Activated naive CD4-positive, alpha-beta T cell treated with anti-CD3 and anti-CD28 coated beads for 36 hours (primary cell): ENCODE measurements at regions of chr4 and their contacts with region 1.

Region 1: DNA sequence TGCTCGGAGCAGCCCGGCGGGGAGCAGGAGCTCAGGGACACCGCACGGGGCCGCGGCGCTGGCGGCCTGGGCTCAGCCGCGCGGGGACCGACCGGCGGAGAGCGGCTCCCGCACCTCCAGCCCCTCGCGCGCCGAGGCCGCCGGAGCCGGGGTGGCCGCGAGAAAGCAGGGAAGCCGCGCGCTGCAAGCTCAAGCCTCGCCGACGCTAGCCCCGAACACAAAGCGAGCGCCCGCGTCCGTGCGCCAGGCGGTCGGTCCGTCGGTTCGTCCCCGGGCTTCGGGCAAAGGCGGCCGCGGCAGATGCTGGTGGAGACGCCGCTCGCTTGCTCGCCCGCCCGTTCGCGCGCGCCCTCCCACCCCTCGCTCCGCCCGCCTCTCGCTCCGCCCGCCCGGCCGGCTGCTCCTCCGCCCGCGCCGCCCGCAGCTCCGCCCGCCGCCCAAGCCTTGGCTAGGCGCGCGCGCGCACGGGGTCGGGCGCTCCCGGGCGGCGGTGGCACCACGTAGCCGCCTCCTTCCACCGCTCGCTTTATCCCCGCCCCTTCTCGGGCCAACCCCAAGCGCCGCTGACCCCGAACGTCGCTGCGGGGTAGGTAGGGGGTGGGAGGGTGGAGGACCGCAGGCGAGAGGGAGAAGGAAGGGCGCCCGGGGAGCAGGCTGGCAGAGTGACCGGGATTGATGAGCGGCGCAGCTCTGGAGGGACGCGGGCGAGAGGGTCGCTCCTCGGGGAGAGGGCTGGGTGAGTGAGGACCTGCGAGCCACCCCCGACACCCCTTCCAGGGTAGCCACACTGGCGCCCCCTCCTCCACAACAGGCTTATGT is at the start of gene TSPAN5:
- DNase-seq: peak; percentile 77
- H3K4me3 Mint-ChIP-seq: peak within 1 kb of the TSS; percentile 98
- H3K27ac Mint-ChIP-seq: peak within 1 kb of the TSS; percentile 71
- H3K4me1 Mint-ChIP-seq: peaks cover 74% of the 10 kb centered on the region
- H3K27me3 Mint-ChIP-seq: no peaks in the 10 kb centered on the region
- total RNA-seq, gene TSPAN5: 12.5 to 13.1 TPM

Region 2: DNA sequence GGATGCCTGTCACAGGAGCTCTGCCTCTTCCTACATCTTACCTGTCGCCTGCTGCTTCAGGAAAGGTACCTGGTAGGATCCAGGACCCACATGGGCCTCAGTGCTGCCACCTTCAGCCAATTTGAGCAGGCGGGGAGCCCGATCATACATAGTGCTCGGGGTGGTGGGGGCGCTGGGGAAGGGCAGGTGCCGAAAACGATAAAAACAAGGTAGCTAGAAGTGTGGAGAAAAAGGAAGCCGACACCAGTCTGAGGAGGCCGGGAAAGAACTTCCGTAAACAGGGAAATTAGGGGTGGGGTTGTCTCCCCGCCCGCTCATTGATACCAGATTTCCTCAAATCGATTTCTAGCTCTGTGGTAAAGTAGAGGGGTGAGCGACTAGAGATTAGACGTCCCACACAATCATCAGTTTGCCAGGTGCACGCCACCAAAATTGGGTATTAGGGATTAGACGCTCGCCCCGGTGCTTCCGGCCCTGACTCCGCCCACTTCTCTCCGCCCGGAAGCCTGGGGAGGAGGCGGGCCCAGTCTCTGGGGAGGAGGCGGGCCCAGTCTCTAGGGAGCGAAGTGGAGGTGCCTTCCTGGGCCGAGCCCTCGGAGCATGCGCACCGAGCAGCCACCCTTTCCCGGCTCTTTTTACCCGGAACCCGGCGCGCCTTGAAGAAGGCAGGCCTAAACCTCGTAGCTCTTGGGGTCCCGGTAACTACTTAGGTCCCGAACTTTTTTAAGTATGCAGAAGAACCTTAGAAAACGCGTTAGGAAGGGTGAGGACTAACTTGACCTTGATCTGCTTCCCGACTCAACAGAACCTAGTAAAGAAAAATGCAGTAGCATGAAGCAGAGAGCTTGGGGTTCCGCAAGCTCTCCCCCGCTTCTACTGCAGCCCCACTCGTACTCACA is 515.2 kb before region 1 on chr4 and contains the start of gene STPG2:
- CTCF ChIA-PET with region 1: no interaction called
- intact Hi-C with region 1: loop called (anchors 1 kb)
- DNase-seq: peak; percentile 95
- H3K4me3 Mint-ChIP-seq: peak within 1 kb of the TSS; percentile 96
- H3K27ac Mint-ChIP-seq: peak within 1 kb of the TSS; percentile 99
- H3K4me1 Mint-ChIP-seq: peaks cover 19% of the 10 kb centered on the region
- H3K27me3 Mint-ChIP-seq: no peaks in the 10 kb centered on the region
- total RNA-seq, gene STPG2: not detected

Region 3: GRCh38 chr4:98374643-98375042 is 283.9 kb before region 1 on chr4:
- CTCF ChIA-PET with region 1: no interaction called
- intact Hi-C with region 1: no loop called
- DNase-seq: no peak
- H3K4me3 Mint-ChIP-seq: no peak overlapping the region
- H3K27ac Mint-ChIP-seq: no peak overlapping the region
- H3K4me1 Mint-ChIP-seq: peaks cover 7% of the 10 kb centered on the region
- H3K27me3 Mint-ChIP-seq: no peaks in the 10 kb centered on the region

Region 4: DNA sequence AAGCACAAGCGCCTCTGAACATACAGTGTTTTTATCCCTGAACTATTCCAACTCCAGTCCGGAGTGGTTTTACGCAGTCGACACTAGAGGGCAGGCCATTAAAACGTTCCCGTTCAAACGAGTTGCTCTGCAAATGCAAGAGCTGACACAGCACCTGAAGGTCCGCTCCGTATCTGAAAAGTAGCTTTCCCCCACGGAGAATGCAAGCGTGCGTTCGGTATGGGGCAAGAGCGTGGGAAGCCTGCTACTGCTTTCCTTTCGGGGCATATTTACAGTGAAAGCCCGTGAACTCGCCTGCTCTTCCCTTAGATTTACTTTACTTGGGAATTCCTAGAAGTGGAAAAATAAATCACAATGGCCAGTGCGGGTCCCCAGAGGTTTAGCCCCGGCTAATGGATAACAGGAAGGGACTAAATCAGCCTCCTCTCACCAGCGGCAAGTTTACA is 190.8 kb before region 1 on chr4:
- CTCF ChIA-PET with region 1: interaction called, 6 read pairs
- intact Hi-C with region 1: loop called (anchors 2 kb)
- DNase-seq: peak; percentile 85
- H3K4me3 Mint-ChIP-seq: peak overlapping the region; percentile 65
- H3K27ac Mint-ChIP-seq: no peak overlapping the region
- H3K4me1 Mint-ChIP-seq: peaks cover 16% of the 10 kb centered on the region
- H3K27me3 Mint-ChIP-seq: no peaks in the 10 kb centered on the region

Region 5: GRCh38 chr4:98601708-98602107 is 56.8 kb before region 1 on chr4:
- CTCF ChIA-PET with region 1: interaction called, 4 read pairs
- intact Hi-C with region 1: loop called (anchors 1 kb)
- DNase-seq: peak; percentile 63
- H3K4me3 Mint-ChIP-seq: peak overlapping the region; percentile 41
- H3K27ac Mint-ChIP-seq: peak overlapping the region; percentile 84
- H3K4me1 Mint-ChIP-seq: peaks cover 46% of the 10 kb centered on the region
- H3K27me3 Mint-ChIP-seq: no peaks in the 10 kb centered on the region

Region 6: DNA sequence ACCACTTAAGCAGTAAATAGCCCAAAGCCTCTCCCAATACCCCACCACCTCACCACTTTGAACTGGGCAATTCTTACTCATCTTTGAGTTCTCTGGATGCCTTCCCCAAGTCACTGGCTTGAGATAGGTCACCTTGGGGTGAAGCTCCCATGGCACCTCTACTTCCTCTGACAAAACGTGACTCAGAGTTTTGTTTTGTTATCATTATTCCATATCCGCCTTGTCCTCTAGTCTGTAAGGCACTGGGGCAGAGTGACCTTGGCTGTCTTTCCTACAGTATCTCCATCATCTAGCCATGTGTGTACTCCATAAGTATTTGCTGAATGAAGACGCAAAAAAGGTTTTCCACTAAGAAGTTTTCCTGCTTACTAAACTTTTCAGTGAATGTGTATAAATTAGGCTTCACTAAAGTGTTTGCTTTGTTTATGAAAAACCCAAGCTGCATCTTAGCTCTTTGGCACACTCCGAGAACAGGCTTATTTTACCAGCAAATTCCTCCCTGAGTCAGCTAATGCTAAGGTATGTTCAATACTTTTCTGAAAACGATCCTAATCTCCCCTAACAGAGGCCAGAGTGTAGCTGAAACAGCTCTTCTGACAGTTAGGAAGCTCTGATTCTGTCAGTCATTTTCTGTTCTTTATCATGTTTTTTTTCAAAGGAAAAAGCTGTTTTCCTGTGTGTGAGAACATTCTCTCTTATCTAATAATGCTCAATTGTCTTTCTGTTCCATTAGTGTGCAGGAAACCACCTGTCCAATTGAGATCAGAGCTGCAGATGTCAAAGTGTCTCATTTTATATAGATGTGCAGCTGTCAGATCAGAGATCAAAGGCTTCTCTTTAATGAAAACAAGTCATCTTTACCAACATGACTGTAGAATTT is 30.2 kb after region 1 on chr4:
- CTCF ChIA-PET with region 1: no interaction called
- intact Hi-C with region 1: loop called (anchors 1 kb)
- DNase-seq: peak; percentile 53
- H3K4me3 Mint-ChIP-seq: no peak overlapping the region
- H3K27ac Mint-ChIP-seq: peak overlapping the region; percentile 12
- H3K4me1 Mint-ChIP-seq: peaks cover 35% of the 10 kb centered on the region
- H3K27me3 Mint-ChIP-seq: no peaks in the 10 kb centered on the region

Region 7: DNA sequence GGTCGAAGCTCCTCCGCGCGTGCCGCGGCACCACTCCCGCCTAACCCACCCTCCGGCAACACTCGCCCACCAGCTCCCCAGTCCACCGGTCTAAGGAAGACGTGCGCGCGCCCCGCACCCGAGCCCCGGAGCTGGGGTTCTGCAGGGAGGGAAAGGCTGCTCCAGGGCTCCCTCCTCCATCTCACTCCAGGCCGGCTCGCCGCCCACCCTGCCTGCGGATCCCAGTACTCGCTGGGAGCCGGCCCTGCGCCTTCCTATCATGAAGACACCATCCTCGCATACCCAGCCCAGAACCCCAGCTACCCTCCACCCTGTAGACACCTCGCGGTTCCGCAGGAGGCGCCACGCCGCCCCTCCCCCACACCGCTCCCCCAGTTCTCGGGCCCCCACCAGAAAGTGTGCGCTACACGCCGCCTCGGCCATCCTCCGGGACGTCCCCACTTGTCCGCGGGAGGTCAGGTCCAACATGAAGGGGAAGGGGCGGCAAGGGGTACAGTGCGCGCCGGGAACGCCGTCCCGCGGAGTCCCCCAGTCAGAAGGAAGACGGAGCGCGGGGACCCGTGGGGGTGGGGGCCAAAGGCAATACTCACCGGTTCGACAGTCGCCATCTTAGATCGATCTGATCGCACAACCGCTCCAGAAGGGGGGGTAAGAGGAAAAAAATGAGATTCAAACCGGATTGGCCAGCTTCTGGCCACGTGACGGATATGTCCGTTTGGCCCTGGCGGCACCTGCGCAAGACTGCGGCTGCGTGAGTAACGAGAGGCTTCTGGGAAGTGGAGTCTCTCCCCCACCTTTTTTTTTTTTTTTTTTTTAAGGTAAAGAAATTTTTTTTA is 270.2 kb after region 1 on chr4 and contains the start of gene EIF4E:
- CTCF ChIA-PET with region 1: no interaction called
- intact Hi-C with region 1: loop called (anchors 1 kb)
- DNase-seq: peak; percentile 98
- H3K4me3 Mint-ChIP-seq: peak within 1 kb of the TSS; percentile 87
- H3K27ac Mint-ChIP-seq: peak within 1 kb of the TSS; percentile 99
- H3K4me1 Mint-ChIP-seq: peaks cover 39% of the 10 kb centered on the region
- H3K27me3 Mint-ChIP-seq: no peaks in the 10 kb centered on the region
- total RNA-seq, gene EIF4E: 104 to 116 TPM

Region 8: DNA sequence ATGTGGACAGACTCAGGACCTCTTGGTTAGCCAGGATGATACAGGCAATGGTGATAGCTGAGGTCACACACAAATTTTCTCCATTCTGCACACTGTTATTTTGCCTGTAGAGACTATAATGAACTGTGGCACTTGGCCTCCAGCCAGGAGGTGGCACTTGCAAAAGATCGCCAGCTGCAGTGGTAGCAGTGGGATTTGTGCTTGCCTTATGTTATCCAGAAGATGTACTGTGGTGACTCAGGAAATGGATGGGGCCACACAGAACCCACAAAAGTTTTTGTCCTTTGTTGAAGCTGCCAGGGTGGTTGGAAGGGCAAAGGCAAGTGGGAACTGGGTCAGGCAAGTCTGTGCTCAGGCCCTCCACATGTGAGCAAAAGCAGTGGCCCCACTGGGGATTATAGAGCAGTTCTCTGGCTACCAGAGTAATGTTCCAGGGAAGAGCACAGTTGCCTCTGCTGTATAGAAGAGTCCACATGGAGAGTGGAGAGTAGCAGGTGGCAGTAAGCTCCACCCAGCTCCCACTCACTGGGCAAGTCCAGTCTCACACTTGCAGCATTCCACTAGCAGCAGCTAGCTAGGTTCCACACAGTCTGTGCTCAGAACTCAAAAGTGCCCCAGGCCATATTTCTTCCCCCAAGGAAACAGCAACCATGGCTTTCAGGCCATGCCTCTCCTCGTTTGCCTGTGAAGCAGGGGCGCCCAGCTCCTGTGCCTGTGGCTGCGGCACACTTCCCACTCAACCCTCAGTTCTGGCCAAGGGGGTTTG is 846.5 kb after region 1 on chr4:
- CTCF ChIA-PET with region 1: no interaction called
- intact Hi-C with region 1: loop called (anchors 5 kb)
- DNase-seq: no peak
- H3K4me3 Mint-ChIP-seq: no peak overlapping the region
- H3K27ac Mint-ChIP-seq: no peak overlapping the region
- H3K4me1 Mint-ChIP-seq: peaks cover 49% of the 10 kb centered on the region
- H3K27me3 Mint-ChIP-seq: no peaks in the 10 kb centered on the region